HepG2 (cell line): ENCODE measurements at regions of chr9 and their contacts with region 1.

Region 1: GRCh38 chr9:36974731-36975130 is 59.3 kb downstream of the PAX5 start:
- DNase-seq: no peak
- ATAC-seq: peak; percentile 62; the same call in 2 of the 3 replicates
- H3K4me3 ChIP-seq: no peak overlapping the region
- H3K27ac ChIP-seq: no peak overlapping the region
- H3K4me1 ChIP-seq: peaks cover 18% of the 10 kb centered on the region; the same call in 1 of the 2 replicates
- H3K27me3 ChIP-seq: peaks cover 0 to 3% of the 10 kb centered on the region in 2 experiments; a peak in 1 of 5 replicates
- CTCF ChIP-seq: peak; percentile 46
- EP300 ChIP-seq: no peak
- POLR2A ChIP-seq: no peak
- RAD21 ChIP-seq: no peak

Region 2: DNA sequence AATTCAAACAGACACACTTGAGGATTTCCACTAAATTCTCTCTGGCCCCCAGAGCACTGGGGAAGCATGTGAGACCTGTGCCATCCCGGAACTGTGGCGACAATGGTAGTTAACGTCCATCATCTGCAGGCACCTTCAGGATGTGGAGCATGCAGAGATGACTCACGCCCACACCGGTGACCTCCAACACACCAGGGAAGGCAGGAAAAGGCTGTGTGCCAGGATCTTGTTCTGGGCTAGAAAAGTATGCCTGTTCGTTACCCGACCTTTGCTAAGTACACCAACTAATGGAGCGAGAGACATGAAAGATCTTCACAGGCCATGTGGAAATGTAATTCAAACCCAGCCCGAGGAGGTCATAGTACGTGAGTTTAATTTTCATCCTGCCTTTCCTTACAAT is 193.2 kb before region 1 on chr9:
- CTCF ChIA-PET with region 1: no interaction called
- POLR2A ChIA-PET with region 1: no interaction called
- in situ Hi-C with region 1: no loop called
- intact Hi-C with region 1: no loop called
- DNase-seq: peak; percentile 18
- ATAC-seq: peak; percentile 56; the same call in 1 of the 3 replicates
- H3K4me3 ChIP-seq: no peak overlapping the region
- H3K27ac ChIP-seq: no peak overlapping the region
- H3K4me1 ChIP-seq: no peaks in the 10 kb centered on the region
- H3K27me3 ChIP-seq: peaks cover 2 to 35% of the 10 kb centered on the region in 2 experiments; a peak in 3 of 5 replicates
- CTCF ChIP-seq: no peak
- EP300 ChIP-seq: no peak
- POLR2A ChIP-seq: no peak
- RAD21 ChIP-seq: no peak

Region 3: GRCh38 chr9:36873247-36873875 is 101.4 kb before region 1 on chr9:
- CTCF ChIA-PET with region 1: no interaction called
- POLR2A ChIA-PET with region 1: no interaction called
- in situ Hi-C with region 1: no loop called
- intact Hi-C with region 1: loop called (anchors 5 kb)
- DNase-seq: peak; percentile 62
- ATAC-seq: peak; percentile 89
- H3K4me3 ChIP-seq: no peak overlapping the region
- H3K27ac ChIP-seq: no peak overlapping the region
- H3K4me1 ChIP-seq: peaks cover 39% of the 10 kb centered on the region
- H3K27me3 ChIP-seq: peaks cover 3 to 50% of the 10 kb centered on the region in 2 experiments; a peak in 4 of 5 replicates
- CTCF ChIP-seq: peak; percentile 92
- EP300 ChIP-seq: no peak
- POLR2A ChIP-seq: no peak
- RAD21 ChIP-seq: peak; percentile 78

Region 4: DNA sequence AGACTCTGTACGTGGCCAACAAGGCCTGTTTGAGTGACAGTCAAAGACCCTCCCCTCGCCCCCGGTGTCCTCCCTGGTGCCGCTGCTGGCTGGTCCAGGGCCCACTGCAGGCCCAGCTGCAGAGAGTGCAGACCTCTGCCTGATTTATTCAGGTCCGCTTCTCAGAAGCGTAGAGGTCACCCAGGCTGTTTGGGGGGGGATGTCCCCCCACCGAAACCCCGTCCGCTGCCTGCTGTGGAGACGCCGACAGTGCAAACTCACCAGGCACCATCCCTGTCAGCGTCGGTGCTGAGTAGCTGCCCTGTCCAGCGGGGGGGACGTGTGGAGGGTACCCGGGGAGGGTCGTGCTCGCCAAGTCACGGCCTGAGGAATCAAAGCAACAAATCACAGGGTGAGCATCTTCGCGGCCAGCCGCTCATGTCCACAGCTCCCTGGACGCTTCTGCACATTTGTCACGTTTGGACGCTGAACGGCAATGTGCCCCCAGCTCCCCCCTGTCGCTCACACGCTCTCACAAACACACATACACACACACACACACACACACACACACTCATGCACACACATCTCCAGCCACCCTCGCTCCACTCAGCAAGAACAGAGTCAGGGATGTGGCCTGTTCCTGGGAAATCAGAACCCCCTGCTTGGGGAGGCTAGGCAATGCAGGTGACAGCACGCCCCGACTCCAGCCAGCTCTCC is 92.8 kb before region 1 on chr9:
- CTCF ChIA-PET with region 1: no interaction called
- POLR2A ChIA-PET with region 1: no interaction called
- in situ Hi-C with region 1: loop called (anchors 10 kb)
- intact Hi-C with region 1: no loop called
- DNase-seq: no peak
- ATAC-seq: no peak
- H3K4me3 ChIP-seq: no peak overlapping the region
- H3K27ac ChIP-seq: no peak overlapping the region
- H3K4me1 ChIP-seq: peaks cover 12% of the 10 kb centered on the region; the same call in 1 of the 2 replicates
- H3K27me3 ChIP-seq: peaks cover 5 to 49% of the 10 kb centered on the region in 2 experiments
- CTCF ChIP-seq: no peak
- EP300 ChIP-seq: no peak
- POLR2A ChIP-seq: no peak
- RAD21 ChIP-seq: no peak

Region 5: GRCh38 chr9:36987891-36988290 is 13.2 kb after region 1 on chr9:
- CTCF ChIA-PET with region 1: no interaction called
- POLR2A ChIA-PET with region 1: no interaction called
- in situ Hi-C with region 1: no loop called
- intact Hi-C with region 1: no loop called
- DNase-seq: no peak
- ATAC-seq: no peak
- H3K4me3 ChIP-seq: no peak overlapping the region
- H3K27ac ChIP-seq: no peak overlapping the region
- H3K4me1 ChIP-seq: no peaks in the 10 kb centered on the region
- H3K27me3 ChIP-seq: peaks cover 6 to 38% of the 10 kb centered on the region in 2 experiments
- CTCF ChIP-seq: no peak
- EP300 ChIP-seq: no peak
- POLR2A ChIP-seq: no peak
- RAD21 ChIP-seq: no peak

Region 6: GRCh38 chr9:37156781-37157356 is 182.1 kb after region 1 on chr9:
- CTCF ChIA-PET with region 1: no interaction called
- POLR2A ChIA-PET with region 1: no interaction called
- in situ Hi-C with region 1: no loop called
- intact Hi-C with region 1: no loop called
- DNase-seq: no peak
- ATAC-seq: no peak
- H3K4me3 ChIP-seq: no peak overlapping the region
- H3K27ac ChIP-seq: no peak overlapping the region
- H3K4me1 ChIP-seq: no peaks in the 10 kb centered on the region
- H3K27me3 ChIP-seq: no peaks in the 10 kb centered on the region
- CTCF ChIP-seq: no peak
- EP300 ChIP-seq: no peak
- POLR2A ChIP-seq: no peak
- RAD21 ChIP-seq: no peak